ENCODE measurements at regions of chr9 and their contacts with region 1.

Region 1: GRCh38 chr9:19048966-19049916 is at the start of gene RRAGA:
- DNase-seq: peak; percentile 94
- H3K4me3 Mint-ChIP-seq: peak within 1 kb of the TSS; percentile 96
- H3K27ac Mint-ChIP-seq: peak within 1 kb of the TSS; percentile 99
- H3K4me1 Mint-ChIP-seq: peaks cover 33% of the 10 kb centered on the region
- H3K27me3 Mint-ChIP-seq: no peaks in the 10 kb centered on the region
- total RNA-seq, gene RRAGA: 45.5 to 46.6 TPM

Region 2: GRCh38 chr9:19174127-19174912 is 125.1 kb after region 1 on chr9:
- CTCF ChIA-PET with region 1: interaction called, 14 read pairs
- POLR2A ChIA-PET with region 1: interaction called, 4 read pairs
- DNase-seq: peak; percentile 41
- H3K4me3 Mint-ChIP-seq: no peak overlapping the region
- H3K27ac Mint-ChIP-seq: peak overlapping the region; percentile 62
- H3K4me1 Mint-ChIP-seq: peaks cover 34% of the 10 kb centered on the region
- H3K27me3 Mint-ChIP-seq: no peaks in the 10 kb centered on the region